Psoas muscle (tissue), 8 donors: ENCODE measurements at regions of chr5 and their contacts with region 1.

Region 1: GRCh38 chr5:97231025-97231636 is 48.1 kb upstream of the RIOK2 start:
- DNase-seq: no peak
- ATAC-seq: peak; percentile 48 to 80 (median 61)
- H3K4me3 ChIP-seq: no peak overlapping the region
- H3K27ac ChIP-seq: no peak overlapping the region
- H3K4me1 ChIP-seq: no peaks in the 10 kb centered on the region
- H3K27me3 ChIP-seq: no peaks in the 10 kb centered on the region
- CTCF ChIP-seq: peak; percentile 70

Region 2: GRCh38 chr5:97071101-97071500 is 160.0 kb before region 1 on chr5:
- intact Hi-C with region 1: no loop called
- DNase-seq: no peak
- ATAC-seq: peak; percentile 79 to 91 (median 87)
- H3K4me3 ChIP-seq: no peak overlapping the region
- H3K27ac ChIP-seq: peak overlapping the region; percentile 14
- H3K4me1 ChIP-seq: peaks cover 4% of the 10 kb centered on the region
- H3K27me3 ChIP-seq: no peaks in the 10 kb centered on the region
- CTCF ChIP-seq: no peak

Region 3: DNA sequence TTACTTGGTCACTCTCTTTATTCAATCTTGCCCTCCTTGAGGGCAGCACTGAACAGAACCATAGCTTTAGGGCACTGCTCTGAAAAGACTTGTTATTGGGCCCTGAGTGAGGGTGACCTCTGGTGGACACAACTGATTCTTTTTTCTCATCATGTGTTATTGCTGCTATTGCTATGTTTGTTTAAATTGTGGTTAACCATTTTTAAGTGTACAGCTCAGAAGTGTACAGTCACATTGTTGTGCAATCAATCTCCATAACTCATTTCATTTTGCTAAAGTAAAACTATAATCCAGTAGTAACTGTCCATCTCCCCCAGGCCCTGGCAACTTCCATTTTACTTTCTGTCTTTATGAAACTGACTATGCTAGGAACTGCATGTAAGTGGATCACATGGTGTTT is 303.0 kb after region 1 on chr5:
- intact Hi-C with region 1: loop called in 1 of 2 experiments (anchors 2 kb)
- DNase-seq: no peak
- ATAC-seq: peak in 2 of 4 donors; percentile 53 to 54
- H3K4me3 ChIP-seq: no peak overlapping the region
- H3K27ac ChIP-seq: no peak overlapping the region
- H3K4me1 ChIP-seq: no peaks in the 10 kb centered on the region
- H3K27me3 ChIP-seq: no peaks in the 10 kb centered on the region
- CTCF ChIP-seq: peak; percentile 37

Region 4: GRCh38 chr5:98827161-98827560 is 1596.0 kb after region 1 on chr5:
- intact Hi-C with region 1: loop called in 1 of 2 experiments (anchors 10 kb)
- DNase-seq: no peak
- ATAC-seq: peak in 2 of 4 donors; percentile 60 to 75
- H3K4me3 ChIP-seq: no peak overlapping the region
- H3K27ac ChIP-seq: no peak overlapping the region
- H3K4me1 ChIP-seq: no peaks in the 10 kb centered on the region
- H3K27me3 ChIP-seq: no peaks in the 10 kb centered on the region
- CTCF ChIP-seq: peak; percentile 65